ENCODE measurements at regions of chr19 and their contacts with region 1.

Region 1: GRCh38 chr19:4909897-4910593 is 744 bp downstream of the UHRF1 start:
- DNase-seq: peak; percentile 84 to 95 (median 92)
- ATAC-seq: peak; percentile 90
- H3K4me3 ChIP-seq: peak overlapping the region; percentile 50 to 63
- H3K27ac ChIP-seq: peak overlapping the region in 1 of 2 donors; percentile 65
- H3K4me1 ChIP-seq: peaks cover 12 to 55% of the 10 kb centered on the region in 2 donors
- H3K27me3 ChIP-seq: peaks cover 0 to 15% of the 10 kb centered on the region in 2 donors
- CTCF ChIP-seq: no peak

Region 2: GRCh38 chr19:4831304-4831978 is 78.6 kb before region 1 on chr19 and contains the start of gene TICAM1:
- intact Hi-C with region 1: no loop called
- DNase-seq: peak; percentile 57 to 95 (median 84)
- ATAC-seq: peak; percentile 98
- H3K4me3 ChIP-seq: peak within 1 kb of the TSS; percentile 93 to 97
- H3K27ac ChIP-seq: peak within 1 kb of the TSS; percentile 85 to 91
- H3K4me1 ChIP-seq: peaks cover 10 to 34% of the 10 kb centered on the region in 2 donors
- H3K27me3 ChIP-seq: no peaks in the 10 kb centered on the region
- CTCF ChIP-seq: no peak
- polyA plus RNA-seq, gene TICAM1: 5.6 to 7.7 (median 6.8) TPM

Region 3: GRCh38 chr19:4867534-4868285 is 42.3 kb before region 1 on chr19 and contains the start of gene PLIN3:
- intact Hi-C with region 1: loop called in 1 of 2 experiments (anchors 2 kb)
- DNase-seq: peak; percentile 95 to 98 (median 97)
- ATAC-seq: peak; percentile 97
- H3K4me3 ChIP-seq: peak within 1 kb of the TSS; percentile 67 to 85
- H3K27ac ChIP-seq: peak within 1 kb of the TSS; percentile 69 to 93
- H3K4me1 ChIP-seq: peaks cover 0 to 62% of the 10 kb centered on the region in 2 donors
- H3K27me3 ChIP-seq: no peaks in the 10 kb centered on the region
- CTCF ChIP-seq: no peak
- polyA plus RNA-seq, gene PLIN3: 37.9 to 50.2 (median 45.0) TPM

Measured in left lung (tissue), 14 donors.